HEK293 (cell line): ENCODE measurements at regions of chr12 and their contacts with region 1.

Region 1: GRCh38 chr12:6335451-6336078 is 6.3 kb downstream of the TNFRSF1A start:
- H3K4me3 ChIP-seq: peak overlapping the region; percentile 28
- H3K27ac ChIP-seq: peak overlapping the region; percentile 90
- H3K4me1 ChIP-seq: peaks cover 27% of the 10 kb centered on the region
- CTCF ChIP-seq: peak; percentile 77

Region 2: DNA sequence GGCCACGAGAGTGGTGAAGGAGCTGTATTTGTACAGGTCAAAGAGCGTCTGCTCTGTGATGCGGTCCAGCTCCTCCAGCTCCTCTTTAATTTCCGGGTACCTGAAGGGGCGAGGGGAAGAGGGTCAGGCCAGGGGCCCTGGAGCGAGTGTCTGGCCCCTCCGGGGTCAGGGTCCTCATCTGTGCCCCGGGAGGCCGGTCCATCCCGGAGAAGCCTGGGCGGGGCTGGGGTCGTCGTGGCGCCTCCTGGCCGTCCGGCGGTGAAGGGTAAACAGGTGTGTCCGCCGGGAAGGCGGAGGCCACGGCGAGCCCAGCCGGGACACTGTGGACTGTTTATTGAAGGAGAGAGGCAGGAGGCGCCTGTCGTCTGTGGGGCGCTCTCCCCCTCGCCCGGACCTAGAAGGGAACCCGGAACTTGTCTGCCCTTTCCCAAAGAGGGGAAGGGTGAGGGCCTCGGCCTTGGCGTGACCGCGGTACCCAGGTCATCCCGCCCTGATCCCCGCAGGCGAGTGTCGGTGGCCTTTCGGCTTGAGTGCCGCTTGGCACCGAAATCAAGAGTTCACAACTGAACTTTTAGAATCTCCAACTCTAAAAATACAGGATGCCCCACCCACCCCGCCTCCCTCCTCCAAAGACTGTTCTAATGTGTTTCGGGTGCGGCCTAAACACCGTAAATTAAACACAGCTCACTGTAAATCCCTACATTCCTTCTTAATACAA is 28.2 kb after region 1 on chr12:
- CTCF ChIA-PET with region 1: interaction called, 3 read pairs
- POLR2A ChIA-PET with region 1: interaction called, 15 read pairs
- H3K4me3 ChIP-seq: peak overlapping the region; percentile 34
- H3K27ac ChIP-seq: peak overlapping the region; percentile 55; the same call in 1 of the 2 replicates
- H3K4me1 ChIP-seq: peaks cover 4% of the 10 kb centered on the region
- CTCF ChIP-seq: no peak

Region 3: DNA sequence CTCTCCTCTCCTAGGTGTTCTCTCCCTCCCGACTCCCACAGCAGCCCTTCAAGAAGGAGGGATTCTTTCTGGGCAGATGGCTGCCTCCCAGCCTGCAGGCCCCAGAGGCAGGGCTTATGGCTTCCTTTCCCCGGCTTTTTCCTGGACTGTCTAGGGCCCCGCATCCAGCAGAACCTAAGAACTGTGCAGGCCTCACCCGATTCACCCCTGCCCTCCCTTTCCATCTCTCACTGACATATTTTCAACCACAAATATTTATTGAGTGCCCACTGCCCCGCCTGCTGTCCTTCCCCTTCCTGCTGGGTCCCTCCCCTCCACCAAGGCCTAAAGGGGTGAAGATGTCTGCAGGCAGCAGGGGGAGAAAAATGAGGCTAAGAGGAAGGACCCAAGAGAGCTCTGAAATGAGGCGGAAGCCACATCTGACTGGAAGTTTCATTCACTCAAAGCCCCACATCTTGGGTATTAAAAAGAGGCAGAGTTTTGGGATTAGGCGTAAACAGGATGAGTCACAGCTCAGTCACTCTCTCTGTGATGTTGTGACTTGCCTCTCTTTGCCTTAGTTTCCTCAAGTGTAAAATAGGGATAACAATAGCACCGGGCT is 36.9 kb after region 1 on chr12:
- CTCF ChIA-PET with region 1: interaction called, 23 read pairs
- POLR2A ChIA-PET with region 1: interaction called, 37 read pairs
- H3K4me3 ChIP-seq: no peak overlapping the region
- H3K27ac ChIP-seq: peak overlapping the region; percentile 86
- H3K4me1 ChIP-seq: peaks cover 24% of the 10 kb centered on the region
- CTCF ChIP-seq: no peak

Region 4: DNA sequence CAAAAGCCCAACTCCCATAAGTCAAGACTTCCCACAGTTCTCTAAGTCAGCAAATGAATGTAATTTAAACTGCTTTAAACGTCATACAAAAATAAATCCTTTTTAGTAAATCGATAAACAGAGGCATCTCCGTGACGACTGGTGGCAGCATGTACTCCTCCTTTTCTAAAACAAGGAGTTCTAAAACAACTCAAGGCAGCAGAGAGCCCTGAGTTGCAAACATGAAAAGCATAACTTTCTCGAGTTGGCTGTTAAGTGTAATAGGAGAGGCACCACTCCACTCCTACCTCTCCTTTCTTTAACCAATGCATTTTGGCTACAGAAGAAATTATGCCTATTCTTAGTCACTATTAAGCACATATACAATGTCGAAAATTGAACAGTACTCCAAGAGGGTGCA is 70.4 kb after region 1 on chr12:
- CTCF ChIA-PET with region 1: no interaction called
- POLR2A ChIA-PET with region 1: no interaction called
- H3K4me3 ChIP-seq: no peak overlapping the region
- H3K27ac ChIP-seq: no peak overlapping the region
- H3K4me1 ChIP-seq: no peaks in the 10 kb centered on the region
- CTCF ChIP-seq: no peak